ENCODE measurements at regions of chr4 and their contacts with region 1.

Region 1: DNA sequence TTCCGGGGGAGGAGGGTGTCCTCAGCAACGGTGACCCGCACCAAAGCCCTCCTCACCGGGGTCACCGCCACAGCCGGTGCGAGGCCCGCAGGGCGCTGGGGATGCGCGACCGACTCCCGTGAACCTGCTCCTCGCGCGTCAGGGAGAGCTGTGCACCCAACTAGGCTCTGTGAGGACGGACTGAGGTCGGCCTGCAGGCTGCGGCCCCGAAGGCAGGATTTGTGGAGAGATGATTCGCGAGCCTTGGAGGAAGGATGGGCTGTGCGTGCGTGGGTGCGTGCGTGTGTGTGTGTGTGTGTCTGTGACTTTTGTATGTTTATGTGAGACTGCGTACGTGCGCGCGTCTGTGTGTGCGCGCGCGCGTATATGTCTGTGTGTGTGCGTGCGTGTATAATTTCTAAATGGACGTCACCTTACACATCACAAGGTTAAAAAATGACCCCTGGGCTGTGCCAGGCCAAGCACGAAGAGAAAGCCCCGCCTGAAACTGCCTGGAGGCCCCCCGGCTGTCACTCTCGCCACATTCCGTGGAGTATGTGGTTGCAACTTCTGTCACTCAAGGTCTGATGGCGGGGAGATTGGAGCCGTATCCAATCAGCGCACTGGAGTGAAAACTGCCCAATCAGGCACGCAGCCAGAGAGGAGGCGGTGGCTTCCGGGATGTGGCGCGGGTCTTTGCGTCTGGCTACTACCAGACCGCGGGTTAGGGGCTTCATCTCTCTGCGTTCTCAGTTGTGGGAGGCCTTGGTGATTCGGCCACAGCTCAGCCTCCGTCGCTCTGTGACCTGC is at the start of gene ZNF141:
- DNase-seq: peak; percentile 83 to 94 (median 93)
- H3K4me3 ChIP-seq: peak within 1 kb of the TSS; percentile 95
- H3K4me3 Mint-ChIP-seq: peak within 1 kb of the TSS; percentile 96 to 99 (median 98)
- H3K27ac ChIP-seq: peak within 1 kb of the TSS; percentile 90
- H3K27ac Mint-ChIP-seq: peak within 1 kb of the TSS; percentile 87 to 99 (median 98)
- H3K4me1 ChIP-seq: peaks cover 15% of the 10 kb centered on the region
- H3K4me1 Mint-ChIP-seq: peaks cover 45 to 54% (median 52%) of the 10 kb centered on the region in 3 donors
- H3K27me3 ChIP-seq: no peaks in the 10 kb centered on the region
- H3K27me3 Mint-ChIP-seq: peaks cover 0 to 6% of the 10 kb centered on the region in 2 donors
- total RNA-seq, gene ZNF141: 20.8 to 22.1 TPM

Region 2: DNA sequence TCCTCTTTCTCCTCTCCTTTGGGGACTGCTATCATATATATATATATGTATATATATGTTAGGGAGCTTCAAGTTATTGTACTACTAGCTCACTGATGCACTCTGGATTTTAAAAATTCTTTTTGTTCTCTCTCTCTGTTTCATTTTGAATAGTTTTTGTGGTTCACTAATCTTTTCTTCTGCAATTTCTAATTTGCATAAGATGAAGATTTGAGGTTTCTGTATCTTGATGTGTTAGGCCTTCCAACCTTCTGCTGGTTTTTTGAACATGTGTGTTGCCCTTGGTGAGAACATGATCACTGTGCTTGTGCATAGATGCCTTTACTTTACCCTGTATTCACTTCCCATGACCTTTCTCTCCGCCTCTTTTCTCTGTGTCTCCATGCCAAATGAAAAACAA is 220.8 kb before region 1 on chr4:
- CTCF ChIA-PET with region 1: no interaction called
- POLR2A ChIA-PET with region 1: no interaction called
- DNase-seq: no peak
- H3K4me3 ChIP-seq: no peak overlapping the region
- H3K4me3 Mint-ChIP-seq: no peak overlapping the region
- H3K27ac ChIP-seq: no peak overlapping the region
- H3K27ac Mint-ChIP-seq: no peak overlapping the region
- H3K4me1 ChIP-seq: peaks cover 15% of the 10 kb centered on the region
- H3K4me1 Mint-ChIP-seq: peaks cover 11 to 15% (median 12%) of the 10 kb centered on the region in 3 donors
- H3K27me3 ChIP-seq: no peaks in the 10 kb centered on the region
- H3K27me3 Mint-ChIP-seq: peaks cover 3 to 28% of the 10 kb centered on the region in 2 donors

Region 3: GRCh38 chr4:422587-422986 is 85.2 kb after region 1 on chr4:
- CTCF ChIA-PET with region 1: no interaction called
- POLR2A ChIA-PET with region 1: no interaction called
- DNase-seq: no peak
- H3K4me3 ChIP-seq: no peak overlapping the region
- H3K4me3 Mint-ChIP-seq: no peak overlapping the region
- H3K27ac ChIP-seq: no peak overlapping the region
- H3K27ac Mint-ChIP-seq: no peak overlapping the region
- H3K4me1 ChIP-seq: no peaks in the 10 kb centered on the region
- H3K4me1 Mint-ChIP-seq: no peaks in the 10 kb centered on the region
- H3K27me3 ChIP-seq: no peaks in the 10 kb centered on the region
- H3K27me3 Mint-ChIP-seq: no peaks in the 10 kb centered on the region

Region 4: DNA sequence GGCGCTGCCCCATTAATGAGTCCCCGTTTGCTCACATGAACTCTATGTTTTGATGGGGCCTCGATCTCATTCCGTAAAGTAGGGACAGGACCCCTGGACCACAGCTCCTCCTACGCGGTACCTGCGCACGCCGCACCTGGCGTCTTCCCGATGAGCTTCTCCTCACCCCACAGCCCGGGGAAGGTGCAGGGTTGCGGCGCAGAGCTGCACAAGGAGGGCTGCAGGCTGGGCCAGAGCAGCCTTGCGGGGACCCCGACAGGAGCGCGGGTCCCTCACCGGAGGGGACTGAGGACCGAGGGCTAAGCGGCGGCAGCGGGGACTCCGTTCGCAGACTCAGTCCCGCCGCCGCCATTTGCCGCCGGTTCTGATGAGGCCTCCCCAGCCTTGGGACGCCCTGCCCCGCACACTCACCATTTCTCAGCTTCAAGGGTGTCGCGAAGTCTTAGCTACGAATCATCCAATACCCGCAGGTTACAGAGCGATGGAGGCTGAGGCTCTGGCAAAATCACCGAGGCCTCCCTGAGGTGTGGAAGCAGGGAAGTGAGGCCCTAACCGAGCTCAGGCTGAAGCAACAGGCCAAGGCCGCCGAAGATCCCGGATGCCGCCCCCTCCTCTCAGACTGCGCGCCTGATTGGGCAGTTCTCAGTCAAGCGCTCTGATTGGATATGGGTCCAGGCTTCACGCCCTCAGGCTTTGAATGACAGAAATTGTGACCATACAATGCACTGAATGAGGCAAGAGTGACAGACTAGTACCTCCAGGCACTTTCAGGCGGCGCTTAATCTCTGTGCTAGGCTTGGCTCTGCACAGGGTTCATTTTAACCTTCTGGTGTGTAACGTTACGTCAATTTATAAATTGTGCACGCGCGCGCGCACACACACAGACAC is 136.5 kb after region 1 on chr4:
- CTCF ChIA-PET with region 1: no interaction called
- POLR2A ChIA-PET with region 1: interaction called, 10 read pairs
- DNase-seq: peak; percentile 84 to 96 (median 95)
- H3K4me3 ChIP-seq: peak overlapping the region; percentile 85
- H3K4me3 Mint-ChIP-seq: peak overlapping the region; percentile 98 to 100 (median 99)
- H3K27ac ChIP-seq: peak overlapping the region; percentile 92
- H3K27ac Mint-ChIP-seq: peak overlapping the region; percentile 96 to 100 (median 99)
- H3K4me1 ChIP-seq: peaks cover 8% of the 10 kb centered on the region
- H3K4me1 Mint-ChIP-seq: peaks cover 39 to 45% (median 44%) of the 10 kb centered on the region in 3 donors
- H3K27me3 ChIP-seq: no peaks in the 10 kb centered on the region
- H3K27me3 Mint-ChIP-seq: no peaks in the 10 kb centered on the region